Gastrocnemius medialis (tissue), 4 donors: ENCODE measurements at regions of chr3 and their contacts with region 1.

Region 1: DNA sequence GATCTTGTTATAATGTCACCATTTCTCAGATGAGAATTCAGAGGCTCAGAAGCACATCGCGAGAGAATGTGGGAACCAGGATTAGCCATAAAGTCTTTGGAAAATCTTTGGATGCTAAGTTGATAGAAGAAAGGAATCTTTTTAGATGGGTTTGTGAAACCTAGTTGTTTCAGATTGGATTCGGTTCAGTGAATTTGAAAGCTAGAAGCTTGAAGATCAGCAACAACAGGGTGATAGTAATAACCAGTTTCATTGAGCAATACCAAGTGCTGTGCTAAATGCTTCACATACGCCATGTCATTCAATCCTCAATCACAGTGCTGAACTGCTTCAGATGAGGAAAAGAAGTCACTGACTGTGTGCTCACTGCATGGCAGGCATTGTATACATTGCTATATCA is 47.4 kb upstream of the MITF start:
- DNase-seq: no peak
- ATAC-seq: peak; percentile 89 to 90
- H3K4me3 ChIP-seq: no peak overlapping the region
- H3K27ac ChIP-seq: peak overlapping the region; percentile 23 to 56 (median 40)
- H3K4me1 ChIP-seq: peaks cover 5 to 19% of the 10 kb centered on the region in 2 donors
- H3K27me3 ChIP-seq: no peaks in the 10 kb centered on the region
- CTCF ChIP-seq: no peak
- POLR2A ChIP-seq: no peak

Region 2: DNA sequence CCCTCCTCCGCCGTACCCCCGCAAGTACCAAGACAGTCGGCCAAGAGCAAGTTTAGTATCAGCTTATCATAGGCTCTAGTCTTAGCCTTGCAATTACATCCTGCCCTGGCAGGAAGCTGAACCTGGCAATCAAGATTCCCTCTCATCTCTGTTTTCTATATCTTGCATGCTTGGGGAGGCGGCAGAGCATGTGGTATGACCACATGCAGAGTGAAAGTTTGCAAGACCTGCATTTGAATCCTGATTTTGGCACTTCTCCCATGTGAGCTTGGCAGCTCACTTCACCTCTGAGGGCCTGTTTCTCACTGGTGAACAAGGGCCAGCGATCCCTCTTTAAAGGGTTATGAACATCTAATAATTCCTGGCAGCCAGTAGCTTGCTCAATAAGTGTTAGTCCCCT is 199.9 kb before region 1 on chr3:
- in situ Hi-C with region 1: no loop called
- intact Hi-C with region 1: no loop called
- DNase-seq: no peak
- ATAC-seq: no peak
- H3K4me3 ChIP-seq: no peak overlapping the region
- H3K27ac ChIP-seq: no peak overlapping the region
- H3K4me1 ChIP-seq: no peaks in the 10 kb centered on the region
- H3K27me3 ChIP-seq: no peaks in the 10 kb centered on the region
- CTCF ChIP-seq: no peak
- POLR2A ChIP-seq: no peak

Region 3: GRCh38 chr3:69739204-69740102 is 47.6 kb after region 1 on chr3 and contains the start of gene MITF:
- in situ Hi-C with region 1: no loop called
- intact Hi-C with region 1: loop called (anchors 5 kb)
- DNase-seq: peak; percentile 95 to 96
- ATAC-seq: peak; percentile 75 to 78
- H3K4me3 ChIP-seq: peak within 1 kb of the TSS; percentile 76 to 98 (median 88)
- H3K27ac ChIP-seq: peak within 1 kb of the TSS; percentile 91 to 97 (median 92)
- H3K4me1 ChIP-seq: peaks cover 60 to 64% of the 10 kb centered on the region in 2 donors
- H3K27me3 ChIP-seq: no peaks in the 10 kb centered on the region
- CTCF ChIP-seq: peak in 1 of 5 experiments; percentile 8
- POLR2A ChIP-seq: peak; percentile 99
- total RNA-seq, gene MITF: 71.1 to 139 (median 109) TPM

Region 4: DNA sequence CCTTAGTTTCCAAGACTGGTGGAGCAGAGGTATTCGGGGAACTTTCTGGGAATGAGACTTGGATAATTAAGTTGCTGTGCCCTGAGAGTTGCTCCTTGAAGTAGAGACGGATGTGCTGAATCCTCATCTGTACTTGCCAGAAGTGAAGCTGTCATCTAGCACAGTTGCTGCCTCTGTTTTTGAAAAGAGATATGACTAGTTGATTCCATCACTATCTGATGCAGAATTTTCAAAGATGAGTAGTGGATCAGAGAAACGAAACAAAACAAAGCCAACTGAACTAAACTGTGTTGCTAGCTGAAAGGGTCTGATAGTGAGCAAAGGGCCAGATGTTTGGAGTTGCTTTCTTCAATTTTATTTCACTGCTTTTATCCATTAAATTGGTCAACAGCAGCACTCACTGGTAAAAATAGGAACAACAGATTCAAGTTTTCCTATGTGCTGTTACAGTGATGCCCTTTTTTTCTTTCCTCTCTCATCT is 100.1 kb after region 1 on chr3:
- in situ Hi-C with region 1: loop called (anchors 5 to 10 kb)
- intact Hi-C with region 1: loop called (anchors 1 kb)
- DNase-seq: no peak
- ATAC-seq: peak; percentile 53 to 57
- H3K4me3 ChIP-seq: peak overlapping the region in 1 of 4 donors; percentile 22
- H3K27ac ChIP-seq: peak overlapping the region; percentile 58 to 73 (median 64)
- H3K4me1 ChIP-seq: peaks cover 45 to 59% of the 10 kb centered on the region in 2 donors
- H3K27me3 ChIP-seq: no peaks in the 10 kb centered on the region
- CTCF ChIP-seq: peak in 4 of 5 experiments; percentile 26 to 50 (median 42)
- POLR2A ChIP-seq: no peak

Region 5: DNA sequence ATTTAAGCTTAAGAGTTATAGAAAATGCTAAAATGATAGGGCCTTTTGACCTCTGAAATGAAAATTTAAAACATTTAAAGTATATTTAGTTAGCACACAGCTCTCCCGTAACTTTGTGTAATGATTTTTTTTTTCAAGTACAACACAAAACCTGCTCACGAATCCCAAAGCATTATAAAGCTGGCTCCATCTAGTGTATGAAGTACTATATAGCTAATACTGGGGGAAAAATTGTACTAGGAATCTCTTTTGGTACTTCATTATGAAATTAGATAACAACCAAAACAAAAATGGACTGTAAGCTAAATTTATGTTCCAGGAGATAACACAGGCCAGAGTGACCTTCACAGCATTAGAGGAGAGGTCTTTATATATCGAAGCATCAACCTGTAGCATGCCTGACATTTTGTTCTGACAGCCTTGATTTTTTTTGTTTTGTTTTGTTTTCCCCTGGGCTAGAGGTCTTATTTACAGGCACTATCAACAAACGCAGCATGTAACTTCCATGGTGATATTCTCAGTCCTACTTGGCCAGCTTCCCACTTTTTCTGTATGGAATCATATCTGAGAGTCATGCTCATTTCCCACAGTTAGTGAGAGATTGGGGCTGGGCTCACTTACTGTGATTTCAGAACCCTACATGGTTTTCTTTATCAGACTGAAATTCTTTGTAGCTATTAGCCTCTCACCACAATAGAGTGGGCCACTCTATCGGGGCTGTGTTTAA is 163.7 kb after region 1 on chr3:
- in situ Hi-C with region 1: no loop called
- intact Hi-C with region 1: loop called (anchors 2 kb)
- DNase-seq: no peak
- ATAC-seq: peak; percentile 60 to 85
- H3K4me3 ChIP-seq: no peak overlapping the region
- H3K27ac ChIP-seq: peak overlapping the region in 1 of 4 donors; percentile 5
- H3K4me1 ChIP-seq: peaks cover 31 to 36% of the 10 kb centered on the region in 2 donors
- H3K27me3 ChIP-seq: no peaks in the 10 kb centered on the region
- CTCF ChIP-seq: peak in 3 of 5 experiments; percentile 33 to 47 (median 36)
- POLR2A ChIP-seq: no peak

Region 6: DNA sequence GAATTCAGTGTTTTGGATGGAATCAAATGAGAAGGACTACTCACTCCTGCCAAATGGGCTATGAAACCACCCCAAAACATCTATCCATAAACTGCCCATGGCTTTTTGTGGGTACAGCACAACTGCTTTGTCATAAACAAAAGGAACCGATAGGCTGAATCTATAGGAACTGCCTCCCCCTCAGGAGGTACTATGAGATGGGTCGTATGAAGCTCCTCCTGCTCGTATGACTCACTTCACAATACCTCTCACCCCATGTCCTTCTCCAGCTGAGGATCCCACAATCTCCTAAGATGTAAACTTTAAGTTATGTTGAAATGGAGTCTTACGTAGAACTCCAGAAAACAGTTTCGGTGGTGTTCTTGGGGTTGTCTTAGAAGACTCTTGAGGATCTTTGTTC is 177.8 kb after region 1 on chr3:
- in situ Hi-C with region 1: no loop called
- intact Hi-C with region 1: loop called (anchors 5 kb)
- DNase-seq: no peak
- ATAC-seq: no peak
- H3K4me3 ChIP-seq: no peak overlapping the region
- H3K27ac ChIP-seq: peak overlapping the region in 3 of 4 donors; percentile 15 to 38 (median 31)
- H3K4me1 ChIP-seq: peaks cover 62 to 63% of the 10 kb centered on the region in 2 donors
- H3K27me3 ChIP-seq: no peaks in the 10 kb centered on the region
- CTCF ChIP-seq: no peak
- POLR2A ChIP-seq: no peak

Region 7: DNA sequence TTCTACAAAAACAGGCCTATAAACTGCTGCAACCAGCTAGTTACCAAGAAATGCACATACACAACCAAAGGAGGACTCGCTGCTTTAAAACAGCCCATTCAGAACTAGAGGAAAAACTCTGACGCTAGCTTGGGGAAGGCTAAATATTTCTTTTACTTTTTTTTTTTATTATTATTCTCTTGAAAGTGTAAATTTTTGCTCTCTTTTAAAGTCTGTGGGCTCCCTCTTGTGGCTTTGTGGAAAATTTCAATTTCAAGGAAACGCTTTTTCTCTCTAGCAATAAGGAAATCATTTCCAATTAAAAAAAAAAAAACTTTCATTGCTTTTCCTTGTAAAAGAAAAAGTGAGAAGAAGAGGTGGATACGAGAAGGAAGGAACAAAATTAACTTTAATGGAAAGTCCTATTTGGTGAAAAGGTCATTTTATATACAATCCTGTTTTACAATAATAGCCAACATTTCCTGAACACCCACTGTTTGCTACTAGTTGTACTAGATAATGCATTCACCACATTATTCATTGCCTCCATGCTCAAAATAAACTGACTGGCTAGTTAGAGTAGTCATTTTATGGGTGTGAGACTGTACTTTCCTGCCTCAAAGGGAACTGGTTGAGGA is 256.5 kb after region 1 on chr3:
- in situ Hi-C with region 1: loop called (anchors 5 to 25 kb)
- intact Hi-C with region 1: loop called (anchors 2 kb)
- DNase-seq: no peak
- ATAC-seq: no peak
- H3K4me3 ChIP-seq: no peak overlapping the region
- H3K27ac ChIP-seq: no peak overlapping the region
- H3K4me1 ChIP-seq: no peaks in the 10 kb centered on the region
- H3K27me3 ChIP-seq: no peaks in the 10 kb centered on the region
- CTCF ChIP-seq: peak; percentile 15 to 65 (median 39)
- POLR2A ChIP-seq: no peak

Region 8: DNA sequence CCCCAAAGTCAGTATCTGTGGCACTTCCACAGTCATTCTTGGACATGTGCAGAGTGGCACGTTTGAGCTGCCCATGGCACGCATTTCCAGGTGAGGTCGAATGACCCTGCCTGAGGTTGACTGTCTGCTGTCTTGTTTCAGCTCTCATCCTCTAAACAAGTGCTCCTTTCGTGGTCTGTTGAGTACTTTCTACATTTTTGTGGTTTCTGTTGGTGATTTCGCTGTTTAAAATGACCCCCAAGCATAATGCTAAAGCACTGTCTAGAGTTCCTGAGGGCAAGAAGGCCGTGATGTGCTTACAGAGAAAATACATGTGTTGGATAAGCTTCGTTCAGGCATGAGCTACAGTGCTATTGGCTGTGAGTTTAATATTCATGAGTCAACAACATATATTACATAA is 267.7 kb after region 1 on chr3:
- in situ Hi-C with region 1: loop called in 1 of 4 experiments (anchors 10 kb)
- intact Hi-C with region 1: no loop called
- DNase-seq: no peak
- ATAC-seq: no peak
- H3K4me3 ChIP-seq: no peak overlapping the region
- H3K27ac ChIP-seq: no peak overlapping the region
- H3K4me1 ChIP-seq: no peaks in the 10 kb centered on the region
- H3K27me3 ChIP-seq: no peaks in the 10 kb centered on the region
- CTCF ChIP-seq: no peak
- POLR2A ChIP-seq: no peak